ENCODE measurements at regions of chr9 and their contacts with region 1.

Region 1: DNA sequence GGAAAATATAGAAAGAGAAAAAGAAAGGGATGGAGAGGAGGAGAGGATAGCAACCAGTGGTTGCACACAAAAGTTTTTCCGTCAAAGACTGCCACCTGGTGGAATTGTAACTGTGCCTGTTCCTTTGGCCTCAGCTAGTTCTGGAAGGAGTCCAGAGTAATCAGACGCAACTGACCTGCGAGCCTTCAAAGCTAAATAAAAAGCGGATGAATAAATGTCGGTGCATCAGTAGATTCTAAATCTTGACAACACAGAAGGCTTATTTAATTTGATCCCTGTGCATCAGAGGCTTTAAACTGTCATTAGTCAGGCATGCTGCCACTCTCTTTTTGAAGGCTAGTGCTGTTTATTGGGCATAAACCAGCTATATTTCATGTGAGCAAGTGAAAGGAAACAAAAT is 132.9 kb upstream of the ACO1 start:
- DNase-seq: no peak
- ATAC-seq: peak; percentile 87
- H3K4me3 ChIP-seq: no peak overlapping the region
- H3K27ac ChIP-seq: no peak overlapping the region
- H3K4me1 ChIP-seq: no peaks in the 10 kb centered on the region
- H3K27me3 ChIP-seq: no peaks in the 10 kb centered on the region
- CTCF ChIP-seq: peak; percentile 78

Region 2: GRCh38 chr9:31807574-31808256 is 443.8 kb before region 1 on chr9:
- CTCF ChIA-PET with region 1: interaction called, 4 read pairs
- POLR2A ChIA-PET with region 1: no interaction called
- in situ Hi-C with region 1: no loop called
- intact Hi-C with region 1: loop called (anchors 10 kb)
- DNase-seq: no peak
- ATAC-seq: peak; percentile 63
- H3K4me3 ChIP-seq: no peak overlapping the region
- H3K27ac ChIP-seq: no peak overlapping the region
- H3K4me1 ChIP-seq: no peaks in the 10 kb centered on the region
- H3K27me3 ChIP-seq: no peaks in the 10 kb centered on the region
- CTCF ChIP-seq: peak; percentile 44

Region 3: DNA sequence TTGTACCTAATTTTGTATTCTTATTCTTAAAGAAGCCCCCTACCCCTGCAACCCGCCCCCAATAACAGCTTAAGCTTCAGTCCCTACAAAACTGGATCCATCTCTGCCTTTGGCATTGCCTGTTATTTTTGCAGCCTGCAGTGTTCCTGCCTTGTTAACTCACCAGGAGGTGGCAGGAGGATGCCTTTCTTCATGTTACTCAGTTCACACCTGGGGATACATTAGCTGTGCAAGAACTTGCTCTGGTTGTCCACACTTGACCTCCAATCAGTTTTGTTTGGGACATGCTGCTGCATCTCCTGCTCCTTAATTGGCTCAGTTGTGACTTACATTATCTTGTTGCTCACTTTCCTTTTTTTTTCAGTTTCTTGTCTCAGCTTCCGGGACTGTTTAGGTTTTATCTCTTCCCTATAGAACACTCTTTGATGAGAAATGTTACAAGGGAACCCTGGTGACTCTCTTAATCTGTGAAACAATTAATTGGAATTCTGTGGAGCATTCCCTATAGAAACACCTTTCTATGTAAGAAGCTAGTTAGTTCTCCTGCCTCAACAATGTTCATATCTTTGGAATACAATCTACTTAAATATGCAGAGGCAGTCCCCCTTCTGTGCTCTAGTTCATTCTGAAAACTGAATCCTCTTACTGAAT is 334.8 kb before region 1 on chr9:
- CTCF ChIA-PET with region 1: interaction called, 7 read pairs
- POLR2A ChIA-PET with region 1: no interaction called
- in situ Hi-C with region 1: no loop called
- intact Hi-C with region 1: loop called (anchors 10 kb)
- DNase-seq: no peak
- ATAC-seq: no peak
- H3K4me3 ChIP-seq: no peak overlapping the region
- H3K27ac ChIP-seq: no peak overlapping the region
- H3K4me1 ChIP-seq: no peaks in the 10 kb centered on the region
- H3K27me3 ChIP-seq: no peaks in the 10 kb centered on the region
- CTCF ChIP-seq: peak; percentile 25

Region 4: DNA sequence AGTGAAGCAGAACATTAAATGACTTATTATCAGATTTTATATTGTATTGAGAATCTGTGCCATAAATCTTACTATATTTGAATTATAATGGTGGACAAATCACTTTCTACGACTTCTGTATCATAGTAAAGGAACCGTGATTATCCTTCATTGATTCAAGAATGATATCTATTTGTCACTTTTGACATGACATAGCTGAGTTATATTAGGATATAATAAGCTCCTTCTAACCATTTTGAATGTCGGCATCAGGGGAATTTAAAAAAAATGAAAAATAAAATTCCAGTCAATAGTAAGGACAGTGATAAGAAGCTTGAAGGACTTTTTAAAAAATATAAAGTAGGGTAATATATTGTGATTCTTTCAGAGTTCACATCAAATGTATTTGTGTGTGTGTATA is 206.0 kb before region 1 on chr9:
- CTCF ChIA-PET with region 1: no interaction called
- POLR2A ChIA-PET with region 1: no interaction called
- in situ Hi-C with region 1: no loop called
- intact Hi-C with region 1: loop called (anchors 10 kb)
- DNase-seq: no peak
- ATAC-seq: no peak
- H3K4me3 ChIP-seq: no peak overlapping the region
- H3K27ac ChIP-seq: no peak overlapping the region
- H3K4me1 ChIP-seq: no peaks in the 10 kb centered on the region
- H3K27me3 ChIP-seq: no peaks in the 10 kb centered on the region
- CTCF ChIP-seq: no peak

Region 5: DNA sequence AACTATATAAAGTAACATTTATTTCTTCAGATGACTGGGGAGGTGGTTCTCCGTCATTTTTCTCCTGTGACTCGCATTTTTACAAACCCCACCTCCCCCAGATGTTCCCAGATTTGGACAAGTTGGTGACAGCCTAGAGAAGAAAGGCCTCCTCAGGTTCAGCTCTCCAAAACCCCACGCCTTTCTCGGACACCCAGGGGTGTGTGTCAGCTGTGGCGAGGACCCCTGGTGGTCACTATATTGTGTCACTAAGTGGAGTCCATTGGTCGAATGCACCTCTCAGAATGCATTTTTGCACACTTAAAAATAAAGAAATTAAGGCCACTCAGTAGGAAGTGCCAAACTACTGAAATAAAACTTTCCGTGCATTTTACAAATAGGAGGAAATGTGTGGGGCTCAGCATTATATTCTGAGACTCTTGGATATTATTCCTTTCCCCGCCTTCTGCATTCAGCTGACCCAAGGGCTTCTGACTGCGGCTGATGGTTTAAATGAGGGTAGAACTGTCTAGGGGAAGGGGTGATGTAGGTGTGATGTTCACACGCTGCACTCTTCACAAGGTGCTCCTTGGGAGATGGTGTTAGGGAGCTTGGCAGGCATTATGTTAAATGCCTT is 180.5 kb after region 1 on chr9:
- CTCF ChIA-PET with region 1: no interaction called
- POLR2A ChIA-PET with region 1: no interaction called
- in situ Hi-C with region 1: no loop called
- intact Hi-C with region 1: no loop called
- DNase-seq: no peak
- ATAC-seq: peak; percentile 83
- H3K4me3 ChIP-seq: no peak overlapping the region
- H3K27ac ChIP-seq: no peak overlapping the region
- H3K4me1 ChIP-seq: no peaks in the 10 kb centered on the region
- H3K27me3 ChIP-seq: no peaks in the 10 kb centered on the region
- CTCF ChIP-seq: peak; percentile 84

Region 6: DNA sequence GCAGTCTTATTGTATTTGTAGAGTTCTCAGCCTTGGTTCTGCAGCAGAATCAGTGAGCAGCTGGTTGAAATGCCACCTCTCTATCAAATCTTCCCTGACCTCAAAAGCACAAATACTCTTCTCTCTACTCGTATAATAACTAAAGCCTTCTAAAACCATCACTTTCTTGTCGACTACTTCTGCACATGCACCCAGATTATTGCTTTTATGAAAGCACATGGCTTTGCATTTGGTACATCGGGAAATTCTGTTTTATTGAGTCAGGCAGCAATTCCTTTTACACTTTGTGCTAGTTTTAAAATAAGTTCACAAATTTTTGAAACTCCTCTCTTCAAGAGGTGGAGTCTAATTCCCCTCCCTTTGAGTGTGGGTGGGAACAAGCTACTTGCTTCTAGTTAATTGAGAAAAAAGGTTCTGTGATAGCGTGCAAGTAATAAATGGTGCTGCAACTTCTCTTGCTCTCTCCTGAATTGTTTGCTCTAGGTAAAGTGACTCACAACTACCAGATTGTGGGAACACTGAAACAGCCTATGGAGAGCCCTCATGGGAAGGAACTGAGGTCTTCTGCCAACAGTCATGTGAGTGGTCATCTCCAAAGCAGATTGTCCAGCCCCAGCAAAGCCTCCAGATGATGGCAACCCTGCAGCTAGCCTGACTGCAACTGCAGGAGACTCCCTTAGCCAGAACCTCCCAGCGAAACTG is 449.9 kb after region 1 on chr9:
- CTCF ChIA-PET with region 1: no interaction called
- POLR2A ChIA-PET with region 1: no interaction called
- in situ Hi-C with region 1: no loop called
- intact Hi-C with region 1: no loop called
- DNase-seq: no peak
- ATAC-seq: no peak
- H3K4me3 ChIP-seq: no peak overlapping the region
- H3K27ac ChIP-seq: no peak overlapping the region
- H3K4me1 ChIP-seq: no peaks in the 10 kb centered on the region
- H3K27me3 ChIP-seq: no peaks in the 10 kb centered on the region
- CTCF ChIP-seq: no peak

Measured in Panc1 (cell line).